ENCODE measurements at regions of chrX and their contacts with region 1.

Region 1: GRCh38 chrX:20066968-20067708 is 49.6 kb downstream of the MAP7D2 start:
- DNase-seq: peak; percentile 60
- ATAC-seq: peak; percentile 65
- H3K4me3 ChIP-seq: no peak overlapping the region
- H3K4me3 Mint-ChIP-seq: no peak overlapping the region
- H3K27ac ChIP-seq: no peak overlapping the region
- H3K27ac Mint-ChIP-seq: no peak overlapping the region
- H3K4me1 ChIP-seq: peaks cover 2% of the 10 kb centered on the region in 2 donors
- H3K4me1 Mint-ChIP-seq: peaks cover 7% of the 10 kb centered on the region
- H3K27me3 ChIP-seq: no peaks in the 10 kb centered on the region
- H3K27me3 Mint-ChIP-seq: no peaks in the 10 kb centered on the region
- CTCF ChIP-seq: peak; percentile 65

Region 2: GRCh38 chrX:19372170-19372546 is 695.0 kb before region 1 on chrX:
- CTCF ChIA-PET with region 1: interaction called, 3 read pairs
- POLR2A ChIA-PET with region 1: no interaction called
- intact Hi-C with region 1: loop called (anchors 1 kb)
- DNase-seq: peak; percentile 66
- ATAC-seq: peak; percentile 64
- H3K4me3 ChIP-seq: peak overlapping the region; percentile 39 to 63 (median 49)
- H3K4me3 Mint-ChIP-seq: peak overlapping the region; percentile 88
- H3K27ac ChIP-seq: no peak overlapping the region
- H3K27ac Mint-ChIP-seq: no peak overlapping the region
- H3K4me1 ChIP-seq: peaks cover 0 to 5% of the 10 kb centered on the region in 2 donors
- H3K4me1 Mint-ChIP-seq: peaks cover 5% of the 10 kb centered on the region
- H3K27me3 ChIP-seq: no peaks in the 10 kb centered on the region
- H3K27me3 Mint-ChIP-seq: no peaks in the 10 kb centered on the region
- CTCF ChIP-seq: peak; percentile 74

Region 3: DNA sequence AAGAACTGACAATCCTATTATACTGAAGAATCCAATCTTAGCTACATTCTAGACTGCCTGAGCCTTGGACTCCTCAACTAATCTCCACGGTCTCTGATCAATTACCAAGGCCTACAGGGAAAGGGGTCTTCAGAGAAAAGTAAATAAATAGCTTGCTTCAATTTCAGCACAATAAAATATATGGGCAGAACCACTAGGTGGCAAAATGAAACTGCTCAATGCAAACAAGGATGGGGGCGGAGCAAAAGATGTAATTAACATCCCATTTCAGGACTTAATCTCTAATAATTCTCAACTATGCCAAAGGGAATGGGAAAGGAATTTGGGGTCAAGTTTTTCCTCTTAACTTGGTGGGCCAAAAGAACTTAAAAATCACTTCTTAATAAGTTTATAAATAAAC is 473.4 kb before region 1 on chrX:
- CTCF ChIA-PET with region 1: interaction called, 4 read pairs
- POLR2A ChIA-PET with region 1: no interaction called
- intact Hi-C with region 1: loop called (anchors 2 kb)
- DNase-seq: peak; percentile 59
- ATAC-seq: no peak
- H3K4me3 ChIP-seq: no peak overlapping the region
- H3K4me3 Mint-ChIP-seq: no peak overlapping the region
- H3K27ac ChIP-seq: no peak overlapping the region
- H3K27ac Mint-ChIP-seq: no peak overlapping the region
- H3K4me1 ChIP-seq: no peaks in the 10 kb centered on the region
- H3K4me1 Mint-ChIP-seq: no peaks in the 10 kb centered on the region
- H3K27me3 ChIP-seq: no peaks in the 10 kb centered on the region
- H3K27me3 Mint-ChIP-seq: no peaks in the 10 kb centered on the region
- CTCF ChIP-seq: peak; percentile 63

Region 4: DNA sequence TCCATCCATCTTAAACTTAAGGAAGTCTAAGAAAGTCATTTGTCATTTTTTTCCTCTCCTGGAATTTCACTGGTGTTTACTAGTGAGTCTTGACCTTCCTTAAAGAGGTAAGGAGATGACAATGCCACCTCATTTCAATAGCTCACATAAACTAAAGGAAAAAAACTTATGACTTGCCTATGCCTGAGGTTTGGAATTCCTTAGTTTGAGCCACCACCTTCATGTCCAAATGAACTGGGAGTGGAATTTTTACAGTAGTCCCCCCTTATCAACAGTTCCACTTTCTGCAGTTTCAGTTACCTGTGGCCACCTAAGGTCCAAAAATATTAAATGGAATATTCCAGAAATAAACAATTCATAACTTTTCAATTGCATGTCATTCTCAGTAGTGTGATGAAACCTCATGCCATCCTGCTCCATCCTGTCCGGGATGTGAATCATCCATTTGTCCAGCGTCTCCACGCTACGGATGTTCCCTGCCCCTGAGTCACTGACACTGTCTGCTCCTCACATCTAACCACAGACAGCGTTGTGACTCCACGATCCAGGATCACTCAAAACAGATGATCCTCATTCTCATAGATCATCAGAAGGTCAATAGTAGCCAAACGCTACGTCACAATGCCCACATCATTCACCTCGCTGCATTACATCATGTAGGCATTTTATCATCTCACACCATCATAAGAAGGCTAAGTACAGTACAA is 357.2 kb before region 1 on chrX:
- CTCF ChIA-PET with region 1: no interaction called
- POLR2A ChIA-PET with region 1: no interaction called
- intact Hi-C with region 1: no loop called
- DNase-seq: no peak
- ATAC-seq: no peak
- H3K4me3 ChIP-seq: no peak overlapping the region
- H3K4me3 Mint-ChIP-seq: no peak overlapping the region
- H3K27ac ChIP-seq: no peak overlapping the region
- H3K27ac Mint-ChIP-seq: no peak overlapping the region
- H3K4me1 ChIP-seq: no peaks in the 10 kb centered on the region
- H3K4me1 Mint-ChIP-seq: peaks cover 28% of the 10 kb centered on the region
- H3K27me3 ChIP-seq: no peaks in the 10 kb centered on the region
- H3K27me3 Mint-ChIP-seq: no peaks in the 10 kb centered on the region
- CTCF ChIP-seq: no peak

Region 5: GRCh38 chrX:19904778-19905367 is 162.3 kb before region 1 on chrX:
- CTCF ChIA-PET with region 1: interaction called, 28 read pairs
- POLR2A ChIA-PET with region 1: no interaction called
- intact Hi-C with region 1: loop called (anchors 1 kb)
- DNase-seq: peak; percentile 62
- ATAC-seq: peak; percentile 57
- H3K4me3 ChIP-seq: no peak overlapping the region
- H3K4me3 Mint-ChIP-seq: no peak overlapping the region
- H3K27ac ChIP-seq: no peak overlapping the region
- H3K27ac Mint-ChIP-seq: no peak overlapping the region
- H3K4me1 ChIP-seq: peaks cover 0 to 5% of the 10 kb centered on the region in 2 donors
- H3K4me1 Mint-ChIP-seq: peaks cover 11% of the 10 kb centered on the region
- H3K27me3 ChIP-seq: no peaks in the 10 kb centered on the region
- H3K27me3 Mint-ChIP-seq: no peaks in the 10 kb centered on the region
- CTCF ChIP-seq: peak; percentile 76

Region 6: GRCh38 chrX:20015945-20016615 is 51.1 kb before region 1 on chrX:
- CTCF ChIA-PET with region 1: no interaction called
- POLR2A ChIA-PET with region 1: no interaction called
- intact Hi-C with region 1: no loop called
- DNase-seq: no peak
- ATAC-seq: no peak
- H3K4me3 ChIP-seq: no peak overlapping the region
- H3K4me3 Mint-ChIP-seq: no peak overlapping the region
- H3K27ac ChIP-seq: no peak overlapping the region
- H3K27ac Mint-ChIP-seq: no peak overlapping the region
- H3K4me1 ChIP-seq: no peaks in the 10 kb centered on the region
- H3K4me1 Mint-ChIP-seq: peaks cover 3% of the 10 kb centered on the region
- H3K27me3 ChIP-seq: no peaks in the 10 kb centered on the region
- H3K27me3 Mint-ChIP-seq: no peaks in the 10 kb centered on the region
- CTCF ChIP-seq: no peak

Region 7: DNA sequence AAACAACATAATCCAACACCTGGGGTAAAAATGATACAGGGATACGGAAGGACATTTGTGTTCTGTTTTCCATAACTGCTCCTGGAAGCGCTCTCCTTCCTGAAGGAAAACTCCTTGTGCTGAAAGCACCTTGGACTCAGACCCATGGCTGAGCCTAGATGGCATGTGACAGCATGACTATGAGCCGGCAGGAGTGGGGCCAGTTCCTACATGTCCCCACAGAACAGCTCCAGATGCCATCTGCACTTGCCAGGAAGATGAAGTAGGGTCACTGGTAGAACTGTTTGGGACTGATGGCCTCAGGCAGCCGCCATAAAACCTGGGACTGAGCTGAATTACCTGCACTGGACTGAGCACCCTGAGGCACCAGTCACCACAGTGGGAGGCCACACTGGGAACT is 20.3 kb before region 1 on chrX:
- CTCF ChIA-PET with region 1: no interaction called
- POLR2A ChIA-PET with region 1: no interaction called
- intact Hi-C with region 1: no loop called
- DNase-seq: no peak
- ATAC-seq: no peak
- H3K4me3 ChIP-seq: no peak overlapping the region
- H3K4me3 Mint-ChIP-seq: no peak overlapping the region
- H3K27ac ChIP-seq: no peak overlapping the region
- H3K27ac Mint-ChIP-seq: no peak overlapping the region
- H3K4me1 ChIP-seq: no peaks in the 10 kb centered on the region
- H3K4me1 Mint-ChIP-seq: no peaks in the 10 kb centered on the region
- H3K27me3 ChIP-seq: no peaks in the 10 kb centered on the region
- H3K27me3 Mint-ChIP-seq: no peaks in the 10 kb centered on the region
- CTCF ChIP-seq: no peak

Region 8: DNA sequence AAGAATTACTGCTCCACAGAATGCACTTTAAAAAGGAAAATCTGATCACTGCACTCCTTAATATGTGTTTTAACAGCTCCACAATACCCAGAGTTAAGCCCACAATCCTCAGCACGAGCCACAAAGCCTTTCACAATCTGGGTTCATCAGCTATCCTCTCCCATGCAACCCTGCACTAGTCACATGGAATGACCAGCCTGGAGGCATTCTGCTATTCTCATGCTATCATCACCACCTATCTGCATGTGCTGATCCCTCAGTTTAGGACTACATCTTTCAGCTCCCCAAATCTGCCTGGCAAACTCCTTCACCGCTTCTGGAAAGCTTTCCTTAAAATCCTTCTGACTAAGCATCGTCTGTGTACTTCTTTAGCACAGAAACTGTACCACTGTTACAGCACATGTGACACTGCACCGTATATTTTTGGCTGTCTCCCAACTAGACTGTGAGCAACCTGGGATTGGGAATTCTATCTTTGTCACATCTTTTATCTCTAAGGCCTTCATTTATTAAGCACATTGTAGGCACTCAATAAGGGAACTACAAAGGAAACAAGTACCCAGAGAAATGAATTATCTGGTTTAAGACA is 92.8 kb after region 1 on chrX:
- CTCF ChIA-PET with region 1: no interaction called
- POLR2A ChIA-PET with region 1: no interaction called
- intact Hi-C with region 1: no loop called
- DNase-seq: no peak
- ATAC-seq: no peak
- H3K4me3 ChIP-seq: no peak overlapping the region
- H3K4me3 Mint-ChIP-seq: no peak overlapping the region
- H3K27ac ChIP-seq: no peak overlapping the region
- H3K27ac Mint-ChIP-seq: no peak overlapping the region
- H3K4me1 ChIP-seq: no peaks in the 10 kb centered on the region
- H3K4me1 Mint-ChIP-seq: peaks cover 2% of the 10 kb centered on the region
- H3K27me3 ChIP-seq: no peaks in the 10 kb centered on the region
- H3K27me3 Mint-ChIP-seq: no peaks in the 10 kb centered on the region
- CTCF ChIP-seq: no peak